Dorsolateral prefrontal cortex (tissue), 120 donors: ENCODE measurements at regions of chr9 and their contacts with region 1.

Region 1: DNA sequence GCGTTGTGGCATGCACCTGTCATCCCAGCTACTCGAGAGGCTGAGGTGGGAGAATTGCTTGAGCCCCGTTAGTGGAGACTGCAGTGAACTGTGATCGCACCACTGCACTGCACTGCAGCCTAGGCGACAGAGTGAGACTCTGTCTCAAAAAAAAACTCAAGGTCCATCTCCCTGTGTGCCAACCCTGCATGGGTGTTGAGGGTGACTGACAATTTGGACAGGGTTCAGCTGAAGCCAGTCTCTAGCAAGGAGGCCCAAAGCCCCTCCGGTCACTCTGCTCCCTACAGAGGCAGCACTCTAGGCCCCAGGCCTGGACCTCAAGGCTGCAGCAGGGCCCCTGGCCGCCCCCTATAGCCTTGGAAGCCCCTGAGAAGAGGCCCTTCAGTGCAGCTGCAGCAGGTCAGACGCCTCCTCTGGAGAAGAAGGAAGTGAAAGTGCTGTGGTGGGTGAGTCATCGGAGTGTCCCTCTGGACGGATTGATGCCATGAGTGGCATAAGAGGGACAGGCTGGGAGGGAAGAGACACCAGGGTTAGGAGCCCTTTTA is 39.2 kb upstream of the NEK6 start:
- DNase-seq: peak in 7 of 10 donors; percentile 22 to 67 (median 48)
- H3K4me3 ChIP-seq: no peak overlapping the region
- H3K27ac ChIP-seq: peak overlapping the region in 5 of 59 donors; percentile 14 to 70 (median 22)
- H3K27me3 ChIP-seq: no peaks in the 10 kb centered on the region
- CTCF ChIP-seq: no peak

Region 2: DNA sequence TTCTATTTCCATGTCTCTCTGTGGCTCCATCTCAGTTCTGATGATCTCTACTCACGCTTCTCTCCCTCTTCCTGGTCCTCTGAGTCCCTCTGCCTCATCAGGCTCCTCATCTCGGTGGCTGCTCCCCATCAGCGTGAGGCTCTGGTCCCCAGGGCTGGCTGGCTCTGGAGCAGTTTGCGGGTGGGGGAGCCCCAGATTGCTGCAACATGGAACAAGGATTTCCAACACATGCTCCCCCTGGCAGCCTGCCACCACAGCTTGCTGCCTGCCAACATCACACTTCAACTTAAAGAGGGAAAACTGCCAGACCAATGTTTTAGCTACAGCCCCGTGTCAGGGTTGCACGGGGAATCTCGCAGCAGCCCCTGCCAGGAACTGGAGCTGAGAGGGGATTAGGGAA is 38.0 kb before region 1 on chr9:
- intact Hi-C with region 1: loop called in 1 of 2 experiments (anchors 5 kb)
- DNase-seq: peak; percentile 17 to 83 (median 70)
- H3K4me3 ChIP-seq: peak overlapping the region in 2 of 59 donors; percentile 0 to 8
- H3K27ac ChIP-seq: no peak overlapping the region
- H3K27me3 ChIP-seq: peaks cover 0 to 26% (median 4%) of the 10 kb centered on the region in 45 donors
- CTCF ChIP-seq: no peak

Region 3: GRCh38 chr9:124190761-124191160 is 27.7 kb before region 1 on chr9:
- intact Hi-C with region 1: loop called in 1 of 2 experiments (anchors 2 kb)
- DNase-seq: peak; percentile 18 to 92 (median 82)
- H3K4me3 ChIP-seq: peak overlapping the region in 5 of 59 donors; percentile 6 to 24 (median 12)
- H3K27ac ChIP-seq: peak overlapping the region in 55 of 59 donors; percentile 20 to 95 (median 75)
- H3K27me3 ChIP-seq: peaks cover 0 to 11% (median 0%) of the 10 kb centered on the region in 45 donors
- CTCF ChIP-seq: peak in 25 of 56 donors; percentile 12 to 50 (median 27)

Region 4: GRCh38 chr9:124257844-124258606 is 39.5 kb after region 1 on chr9 and contains the start of gene NEK6:
- intact Hi-C with region 1: loop called in 1 of 2 experiments (anchors 5 kb)
- DNase-seq: peak in 3 of 10 donors; percentile 24 to 70 (median 27)
- H3K4me3 ChIP-seq: peak within 1 kb of the TSS; percentile 59 to 91 (median 75)
- H3K27ac ChIP-seq: peak within 1 kb of the TSS in 58 of 59 donors; percentile 0 to 95 (median 80)
- H3K27me3 ChIP-seq: no peaks in the 10 kb centered on the region
- CTCF ChIP-seq: no peak
- total RNA-seq, gene NEK6: 31.2 to 112 (median 51.6) TPM

Region 5: GRCh38 chr9:124297553-124297905 is 79.0 kb after region 1 on chr9:
- intact Hi-C with region 1: loop called in 1 of 2 experiments (anchors 5 kb)
- DNase-seq: peak in 7 of 10 donors; percentile 26 to 71 (median 60)
- H3K4me3 ChIP-seq: peak overlapping the region in 3 of 59 donors; percentile 5 to 26 (median 14)
- H3K27ac ChIP-seq: peak overlapping the region in 32 of 59 donors; percentile 8 to 78 (median 42)
- H3K27me3 ChIP-seq: no peaks in the 10 kb centered on the region
- CTCF ChIP-seq: no peak